Activated naive CD8-positive, alpha-beta T cell treated with anti-CD3 and anti-CD28 coated beads, Interleukin-2, amount 10 ng/mL, durations not matched to agents 7 days and 5 days (primary cell): ENCODE measurements at regions of chr5 and their contacts with region 1.

Region 1: DNA sequence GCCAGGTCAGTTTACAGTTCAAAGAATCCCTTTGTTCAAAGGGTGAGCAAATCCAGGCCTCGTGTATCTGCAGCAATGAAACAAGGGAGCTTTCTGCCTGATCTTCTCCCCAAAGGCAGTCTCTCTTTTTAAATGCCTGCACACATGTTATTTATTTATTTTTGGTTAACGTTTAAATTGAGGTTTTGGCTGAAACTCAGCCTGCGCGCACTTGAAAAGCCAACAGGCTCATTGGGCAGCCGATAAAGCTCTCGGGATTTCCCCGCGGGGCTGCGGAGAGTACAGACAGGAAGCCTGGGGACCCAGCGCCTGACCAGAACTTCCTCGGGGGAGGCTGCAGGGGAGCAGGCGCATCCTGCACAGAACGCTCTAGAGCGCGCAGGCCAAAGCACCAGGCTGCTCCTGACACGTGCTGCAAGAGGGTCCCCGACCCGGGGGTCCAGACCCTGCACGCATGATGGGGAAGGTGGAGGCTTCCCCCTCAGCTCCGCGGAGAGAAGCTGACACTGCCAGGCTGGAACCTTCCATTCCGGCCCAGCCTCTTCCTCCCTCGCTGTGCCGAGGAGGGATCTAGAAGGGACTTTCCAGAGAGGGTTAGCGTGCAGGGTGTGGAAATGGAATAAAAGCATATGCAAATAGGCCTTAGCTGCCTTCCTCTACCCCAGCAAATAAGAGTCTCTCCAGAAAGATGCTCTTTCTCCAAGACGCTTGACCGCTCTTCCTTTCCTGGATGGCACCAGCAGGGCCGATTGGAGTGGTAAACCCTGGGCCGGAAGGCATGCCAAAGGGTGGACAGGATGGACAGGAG is 46.1 kb downstream of the PTTG1 start:
- DNase-seq: peak; percentile 81
- ATAC-seq: peak; percentile 90
- H3K4me3 Mint-ChIP-seq: peak overlapping the region; percentile 93
- H3K27ac Mint-ChIP-seq: peak overlapping the region; percentile 94
- H3K4me1 Mint-ChIP-seq: peaks cover 58% of the 10 kb centered on the region
- H3K27me3 Mint-ChIP-seq: no peaks in the 10 kb centered on the region

Region 2: DNA sequence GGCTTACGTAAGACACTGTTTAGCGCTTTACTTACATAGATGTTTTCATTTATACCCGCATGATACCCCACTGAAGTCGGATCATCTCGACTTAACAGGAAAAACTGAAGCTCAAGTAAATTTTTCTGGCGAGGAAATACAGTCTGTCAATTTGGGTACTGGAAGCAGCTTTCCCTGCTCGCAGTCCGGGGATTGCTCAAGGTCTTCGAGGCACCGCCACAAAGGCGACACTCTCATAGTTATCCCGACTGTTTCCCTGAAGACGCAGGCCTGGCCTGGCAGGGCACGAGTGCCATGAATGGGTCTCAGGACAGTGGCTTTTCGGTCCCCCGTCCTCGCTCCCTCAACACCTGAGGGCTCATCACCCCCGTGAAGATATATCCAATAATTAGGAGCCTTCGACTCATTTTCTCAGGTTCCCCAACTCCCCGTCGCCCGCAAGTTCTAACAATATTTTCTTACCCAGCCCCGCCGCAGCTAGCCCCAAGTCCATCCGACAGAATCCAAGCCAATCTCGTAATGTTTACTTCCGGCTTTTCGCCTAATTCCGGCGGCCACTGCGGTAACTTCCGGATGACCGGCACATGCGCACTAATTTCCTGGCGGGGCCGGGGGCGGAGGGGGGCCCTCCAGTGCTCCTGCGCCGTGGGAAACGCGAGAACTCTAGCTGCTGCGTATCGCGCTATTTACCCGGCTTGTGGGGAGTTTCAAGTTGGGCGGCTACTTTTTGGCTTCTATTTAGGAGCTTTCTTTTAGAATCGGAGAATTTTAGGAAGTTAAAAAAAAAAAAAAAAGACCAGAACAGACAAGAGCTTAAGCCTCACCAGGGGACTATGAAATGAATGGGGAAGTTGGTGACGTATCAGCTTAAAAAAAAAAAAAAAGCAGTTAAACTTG is 49.0 kb before region 1 on chr5 and contains the start of gene SLU7:
- POLR2A ChIA-PET with region 1: interaction called, 12 read pairs
- DNase-seq: peak; percentile 90
- ATAC-seq: peak; percentile 87
- H3K4me3 Mint-ChIP-seq: peak within 1 kb of the TSS; percentile 97
- H3K27ac Mint-ChIP-seq: peak within 1 kb of the TSS; percentile 95
- H3K4me1 Mint-ChIP-seq: peaks cover 42% of the 10 kb centered on the region
- H3K27me3 Mint-ChIP-seq: no peaks in the 10 kb centered on the region
- total RNA-seq, gene SLU7: 62.3 to 66.6 TPM

Region 3: GRCh38 chr5:160506006-160507005 is 38.5 kb after region 1 on chr5:
- POLR2A ChIA-PET with region 1: interaction called, 15 read pairs
- DNase-seq: peak; percentile 63
- ATAC-seq: peak; percentile 83
- H3K4me3 Mint-ChIP-seq: peak overlapping the region; percentile 62
- H3K27ac Mint-ChIP-seq: peak overlapping the region; percentile 82
- H3K4me1 Mint-ChIP-seq: peaks cover 25% of the 10 kb centered on the region
- H3K27me3 Mint-ChIP-seq: peaks cover 6% of the 10 kb centered on the region